Aorta (tissue), 5 donors: ENCODE measurements at regions of chr3 and their contacts with region 1.

Region 1: DNA sequence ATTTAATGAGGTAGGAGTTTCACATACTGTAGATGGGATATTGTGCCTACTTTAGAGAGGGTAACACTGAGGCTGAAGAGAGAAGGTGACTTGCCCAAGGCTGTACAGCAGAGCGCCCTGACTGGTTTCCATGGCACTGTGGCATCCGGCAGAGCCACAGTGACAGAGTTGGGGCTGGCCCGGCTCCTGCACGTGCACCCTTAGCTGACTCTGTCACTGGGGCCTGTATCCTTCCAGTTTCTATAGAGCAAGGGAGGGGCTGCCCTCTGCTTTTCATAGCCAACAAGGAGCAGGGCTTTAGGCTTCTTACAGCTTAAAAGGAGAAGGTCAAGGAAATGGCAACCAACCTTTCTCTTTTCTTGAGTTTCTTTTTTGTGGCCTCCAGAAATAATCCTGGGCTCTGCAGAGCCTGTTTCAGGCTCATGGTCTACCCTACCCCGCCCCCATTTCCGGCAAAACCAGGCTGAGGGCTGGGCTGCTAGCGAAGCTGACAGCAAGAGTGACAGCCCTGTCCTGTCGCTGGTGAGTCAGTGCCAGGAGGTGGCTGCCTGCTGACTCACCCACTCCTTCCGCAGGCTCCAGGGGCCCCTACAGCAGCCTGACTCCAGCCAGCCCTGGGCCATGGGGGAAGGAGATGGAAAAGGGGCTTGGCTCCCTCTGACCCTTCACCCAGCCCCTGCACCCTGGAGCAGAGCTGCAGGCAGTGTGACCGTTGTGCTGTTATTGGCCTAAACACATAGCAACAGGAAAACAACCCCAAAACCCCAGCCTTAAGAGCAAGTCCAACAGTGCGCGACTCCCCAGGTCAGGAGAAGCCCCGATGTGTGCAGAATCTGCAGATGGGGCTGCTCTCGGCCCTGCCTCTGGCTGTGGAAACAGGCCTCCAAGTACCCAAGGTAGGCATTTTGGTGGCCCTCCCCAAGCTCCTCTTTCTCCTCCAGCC is 29.8 kb downstream of the SLC6A6 start:
- DNase-seq: peak; percentile 95 to 97
- ATAC-seq: peak; percentile 91
- H3K4me3 ChIP-seq: no peak overlapping the region
- H3K27ac ChIP-seq: peak overlapping the region in 1 of 2 donors; percentile 35
- H3K4me1 ChIP-seq: no peaks in the 10 kb centered on the region
- H3K27me3 ChIP-seq: no peaks in the 10 kb centered on the region

Region 2: GRCh38 chr3:14452679-14453367 is 20.7 kb after region 1 on chr3:
- intact Hi-C with region 1: loop called in 1 of 2 experiments (anchors 2 kb)
- DNase-seq: peak; percentile 95 to 96
- ATAC-seq: peak; percentile 95
- H3K4me3 ChIP-seq: no peak overlapping the region
- H3K27ac ChIP-seq: peak overlapping the region in 1 of 2 donors; percentile 77
- H3K4me1 ChIP-seq: no peaks in the 10 kb centered on the region
- H3K27me3 ChIP-seq: no peaks in the 10 kb centered on the region

Region 3: DNA sequence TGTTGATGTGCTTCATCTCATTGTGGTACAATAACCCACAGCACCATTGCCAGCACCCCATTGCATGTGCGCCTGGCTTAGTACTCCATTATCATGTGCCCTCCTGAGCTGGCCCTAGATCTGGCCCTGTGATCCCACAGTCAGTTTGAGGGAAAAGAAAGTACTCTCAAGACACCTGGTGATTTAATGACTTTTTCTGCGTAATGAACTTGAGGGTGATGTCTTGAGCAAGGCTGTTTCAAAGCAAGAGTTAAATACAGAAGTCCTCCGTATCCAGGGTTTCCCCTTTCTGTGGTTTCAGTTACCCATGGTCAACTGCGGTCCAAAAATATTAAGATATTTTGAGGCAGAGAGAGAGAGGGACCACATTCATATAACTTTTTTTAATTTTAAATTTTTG is 259.1 kb after region 1 on chr3:
- intact Hi-C with region 1: no loop called
- DNase-seq: no peak
- ATAC-seq: no peak
- H3K4me3 ChIP-seq: no peak overlapping the region
- H3K27ac ChIP-seq: no peak overlapping the region
- H3K4me1 ChIP-seq: no peaks in the 10 kb centered on the region
- H3K27me3 ChIP-seq: no peaks in the 10 kb centered on the region